Activated CD4-positive, alpha-beta T cell treated with anti-CD3 and anti-CD28 coated beads, Interleukin-2, amount 10 ng/mL, durations not matched to agents 7 days and 5 days (primary cell): ENCODE measurements at regions of chr6 and their contacts with region 1.

Region 1: GRCh38 chr6:24933868-24934401 is 1.8 kb downstream of the RIPOR2 start:
- DNase-seq: peak; percentile 68
- H3K4me3 Mint-ChIP-seq: peak overlapping the region; percentile 92
- H3K27ac Mint-ChIP-seq: peak overlapping the region; percentile 99
- H3K4me1 Mint-ChIP-seq: peaks cover 58% of the 10 kb centered on the region
- H3K27me3 Mint-ChIP-seq: no peaks in the 10 kb centered on the region

Region 2: GRCh38 chr6:24720604-24721460 is 213.1 kb before region 1 on chr6:
- CTCF ChIA-PET with region 1: no interaction called
- POLR2A ChIA-PET with region 1: interaction called, 16 read pairs
- DNase-seq: peak; percentile 100
- H3K4me3 Mint-ChIP-seq: peak overlapping the region; percentile 96
- H3K27ac Mint-ChIP-seq: peak overlapping the region; percentile 100
- H3K4me1 Mint-ChIP-seq: peaks cover 36% of the 10 kb centered on the region
- H3K27me3 Mint-ChIP-seq: no peaks in the 10 kb centered on the region

Region 3: GRCh38 chr6:24910961-24911712 is 22.8 kb before region 1 on chr6:
- CTCF ChIA-PET with region 1: interaction called, 17 read pairs
- POLR2A ChIA-PET with region 1: no interaction called
- DNase-seq: no peak
- H3K4me3 Mint-ChIP-seq: peak overlapping the region; percentile 85
- H3K27ac Mint-ChIP-seq: peak overlapping the region; percentile 90
- H3K4me1 Mint-ChIP-seq: peaks cover 94% of the 10 kb centered on the region
- H3K27me3 Mint-ChIP-seq: no peaks in the 10 kb centered on the region

Region 4: DNA sequence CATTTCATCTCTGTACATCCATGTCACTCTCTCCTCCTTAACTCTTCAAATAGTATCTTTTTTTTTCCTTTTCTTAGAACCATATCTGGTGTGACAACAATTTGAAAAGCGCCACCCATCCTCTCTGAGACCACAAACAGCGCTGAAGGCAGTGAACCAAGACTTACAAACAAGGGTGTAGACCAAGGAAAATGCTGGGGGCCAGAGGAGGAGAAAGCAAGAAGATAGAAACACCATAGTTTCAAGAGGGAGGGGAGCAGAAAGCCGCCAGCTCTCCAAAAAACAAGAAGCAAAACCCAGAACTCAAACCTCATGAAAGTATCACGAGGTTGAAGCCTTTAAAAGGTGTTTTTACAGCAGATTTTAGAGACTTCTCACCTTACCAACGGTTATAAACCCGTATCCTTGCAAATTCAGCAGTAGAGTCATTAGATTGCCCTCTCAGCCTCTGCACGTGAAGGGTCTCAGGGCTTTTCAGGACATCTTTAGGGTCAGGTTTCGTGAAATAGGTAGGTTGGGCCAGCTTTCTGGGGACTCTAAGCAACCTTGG is 15.2 kb after region 1 on chr6:
- CTCF ChIA-PET with region 1: interaction called, 26 read pairs
- POLR2A ChIA-PET with region 1: interaction called, 10 read pairs
- DNase-seq: peak; percentile 90
- H3K4me3 Mint-ChIP-seq: peak overlapping the region; percentile 40
- H3K27ac Mint-ChIP-seq: peak overlapping the region; percentile 96
- H3K4me1 Mint-ChIP-seq: peaks cover 76% of the 10 kb centered on the region
- H3K27me3 Mint-ChIP-seq: no peaks in the 10 kb centered on the region

Region 5: DNA sequence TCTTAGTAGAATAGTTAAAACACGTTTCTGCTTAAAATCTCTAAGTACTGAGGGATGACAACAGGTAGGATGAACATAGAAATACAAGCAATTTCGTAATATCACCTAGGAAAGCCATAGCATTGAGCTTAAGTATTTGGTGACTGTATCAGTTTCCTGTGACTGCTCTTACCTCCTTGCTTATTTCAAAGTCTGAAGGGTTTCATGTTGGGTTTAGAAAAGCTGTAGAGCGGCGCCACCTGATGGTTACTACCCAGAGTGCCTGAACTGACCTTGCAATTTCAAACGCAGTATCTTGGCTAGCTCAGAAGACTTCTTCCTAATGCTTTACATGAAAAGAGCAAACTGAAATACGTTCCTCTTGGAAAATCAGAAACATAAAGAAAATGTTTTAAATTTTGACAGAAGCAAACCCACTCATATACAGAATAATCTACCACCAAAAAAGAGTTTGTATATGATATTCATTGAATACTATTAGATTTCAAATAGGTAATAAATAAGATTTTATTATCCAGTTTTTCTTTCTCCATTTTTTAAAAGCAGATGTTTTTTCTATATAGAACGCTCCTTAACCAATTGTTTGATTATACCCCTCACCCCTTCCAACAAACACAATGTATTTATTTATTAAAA is 84.1 kb after region 1 on chr6:
- CTCF ChIA-PET with region 1: interaction called, 10 read pairs
- POLR2A ChIA-PET with region 1: interaction called, 4 read pairs
- DNase-seq: peak; percentile 85
- H3K4me3 Mint-ChIP-seq: no peak overlapping the region
- H3K27ac Mint-ChIP-seq: peak overlapping the region; percentile 52
- H3K4me1 Mint-ChIP-seq: peaks cover 41% of the 10 kb centered on the region
- H3K27me3 Mint-ChIP-seq: no peaks in the 10 kb centered on the region